Thyroid gland (tissue), 4 donors: ENCODE measurements at regions of chr1 and their contacts with region 1.

Region 1: GRCh38 chr1:56967900-56968832 is 2.4 kb upstream of the C8B start:
- DNase-seq: peak; percentile 14 to 50
- H3K4me3 ChIP-seq: no peak overlapping the region
- H3K27ac ChIP-seq: no peak overlapping the region
- H3K4me1 ChIP-seq: peaks cover 0 to 5% of the 10 kb centered on the region in 2 donors
- H3K27me3 ChIP-seq: no peaks in the 10 kb centered on the region
- CTCF ChIP-seq: peak in 5 of 6 experiments; percentile 32 to 44 (median 36)
- POLR2A ChIP-seq: no peak

Region 2: GRCh38 chr1:56831871-56832693 is 136.1 kb before region 1 on chr1:
- intact Hi-C with region 1: loop called (anchors 5 kb)
- DNase-seq: peak; percentile 51 to 75
- H3K4me3 ChIP-seq: no peak overlapping the region
- H3K27ac ChIP-seq: no peak overlapping the region
- H3K4me1 ChIP-seq: peaks cover 0 to 2% of the 10 kb centered on the region in 2 donors
- H3K27me3 ChIP-seq: no peaks in the 10 kb centered on the region
- CTCF ChIP-seq: peak; percentile 87 to 94 (median 91)
- POLR2A ChIP-seq: no peak

Region 3: GRCh38 chr1:56911098-56911938 is 56.8 kb before region 1 on chr1:
- intact Hi-C with region 1: no loop called
- DNase-seq: no peak
- H3K4me3 ChIP-seq: no peak overlapping the region
- H3K27ac ChIP-seq: no peak overlapping the region
- H3K4me1 ChIP-seq: peaks cover 0 to 12% of the 10 kb centered on the region in 2 donors
- H3K27me3 ChIP-seq: no peaks in the 10 kb centered on the region
- CTCF ChIP-seq: no peak
- POLR2A ChIP-seq: no peak

Region 4: DNA sequence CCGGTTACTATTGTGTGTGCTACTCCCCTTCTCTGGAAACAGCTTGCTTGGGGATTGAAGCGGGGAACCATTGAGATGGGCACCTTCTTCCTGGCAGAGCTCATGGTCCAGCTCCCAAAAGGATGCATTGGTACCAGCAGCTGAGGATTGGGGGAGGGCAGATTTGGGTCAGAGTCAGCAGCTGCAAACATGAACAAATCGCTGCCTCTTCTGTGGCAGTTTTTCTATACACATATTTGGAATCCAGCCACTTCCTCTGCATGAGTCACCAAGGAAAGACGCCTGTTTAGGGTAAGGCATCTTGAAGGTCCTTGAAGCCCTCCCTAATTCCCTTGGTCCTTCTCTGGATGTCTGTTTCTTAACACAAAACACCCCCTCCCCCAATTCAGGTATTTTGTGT is 351.0 kb after region 1 on chr1:
- intact Hi-C with region 1: no loop called
- DNase-seq: no peak
- H3K4me3 ChIP-seq: no peak overlapping the region
- H3K27ac ChIP-seq: no peak overlapping the region
- H3K4me1 ChIP-seq: no peaks in the 10 kb centered on the region
- H3K27me3 ChIP-seq: no peaks in the 10 kb centered on the region
- CTCF ChIP-seq: no peak
- POLR2A ChIP-seq: no peak